Activated T-helper 1 cell treated with anti-CD3 and anti-CD28 coated beads, Interleukin-12 subunit alpha, Interleukin-12 subunit beta, Interleukin-2, Interleukin-4 antibody, amounts not matched to agents 30 ng/mL and 10 ng/mL and 1 ng/mL, durations not matched to agents 14 hours and 24 hours and 36 hours (primary cell): ENCODE measurements at regions of chr7 and their contacts with region 1.

Region 1: DNA sequence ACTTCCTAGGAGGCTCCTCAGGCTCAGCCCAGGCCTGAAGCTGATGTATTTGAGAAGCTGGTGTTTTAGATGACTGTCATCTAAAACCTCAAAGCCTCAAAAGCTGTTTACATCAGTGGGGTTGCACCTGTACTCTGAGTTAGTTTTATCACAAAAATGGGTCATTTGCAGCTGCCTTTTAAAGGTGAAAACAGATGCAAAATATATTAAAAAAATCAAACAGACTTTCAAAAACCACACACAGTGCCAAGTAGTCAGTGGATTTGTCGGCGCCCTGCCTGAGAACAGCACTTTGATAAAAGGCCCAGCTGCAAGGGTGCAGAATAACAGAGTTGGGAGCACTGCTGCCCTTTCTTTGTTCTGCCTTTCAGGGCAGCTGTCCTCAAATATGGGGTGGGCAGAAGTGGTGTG is 103.0 kb downstream of the VOPP1 start:
- DNase-seq: peak; percentile 16
- H3K4me3 Mint-ChIP-seq: peak overlapping the region; percentile 53
- H3K27ac Mint-ChIP-seq: peak overlapping the region; percentile 74
- H3K4me1 Mint-ChIP-seq: peaks cover 53% of the 10 kb centered on the region
- H3K27me3 Mint-ChIP-seq: no peaks in the 10 kb centered on the region

Region 2: GRCh38 chr7:55005241-55005851 is 463.9 kb before region 1 on chr7:
- intact Hi-C with region 1: no loop called
- DNase-seq: no peak
- H3K4me3 Mint-ChIP-seq: no peak overlapping the region
- H3K27ac Mint-ChIP-seq: no peak overlapping the region
- H3K4me1 Mint-ChIP-seq: no peaks in the 10 kb centered on the region
- H3K27me3 Mint-ChIP-seq: peaks cover 11% of the 10 kb centered on the region

Region 3: GRCh38 chr7:55509322-55509721 is 40.0 kb after region 1 on chr7:
- intact Hi-C with region 1: loop called (anchors 5 kb)
- DNase-seq: no peak
- H3K4me3 Mint-ChIP-seq: no peak overlapping the region
- H3K27ac Mint-ChIP-seq: peak overlapping the region; percentile 64
- H3K4me1 Mint-ChIP-seq: peaks cover 76% of the 10 kb centered on the region
- H3K27me3 Mint-ChIP-seq: no peaks in the 10 kb centered on the region